Naive thymus-derived CD8-positive, alpha-beta T cell (primary cell): ENCODE measurements at regions of chr1 and their contacts with region 1.

Region 1: GRCh38 chr1:28235755-28236655 is at the start of gene ATP5IF1:
- DNase-seq: peak; percentile 84 to 97 (median 94)
- ATAC-seq: peak; percentile 95
- H3K4me3 Mint-ChIP-seq: peak within 1 kb of the TSS in 1 of 10 donors; percentile 29
- H3K27ac Mint-ChIP-seq: no peak within 1 kb of the TSS
- H3K4me1 Mint-ChIP-seq: peaks cover 8 to 28% (median 18%) of the 10 kb centered on the region in 4 donors
- H3K27me3 Mint-ChIP-seq: no peaks in the 10 kb centered on the region
- polyA plus RNA-seq, gene ATP5IF1: 468 to 666 (median 606) TPM

Region 2: DNA sequence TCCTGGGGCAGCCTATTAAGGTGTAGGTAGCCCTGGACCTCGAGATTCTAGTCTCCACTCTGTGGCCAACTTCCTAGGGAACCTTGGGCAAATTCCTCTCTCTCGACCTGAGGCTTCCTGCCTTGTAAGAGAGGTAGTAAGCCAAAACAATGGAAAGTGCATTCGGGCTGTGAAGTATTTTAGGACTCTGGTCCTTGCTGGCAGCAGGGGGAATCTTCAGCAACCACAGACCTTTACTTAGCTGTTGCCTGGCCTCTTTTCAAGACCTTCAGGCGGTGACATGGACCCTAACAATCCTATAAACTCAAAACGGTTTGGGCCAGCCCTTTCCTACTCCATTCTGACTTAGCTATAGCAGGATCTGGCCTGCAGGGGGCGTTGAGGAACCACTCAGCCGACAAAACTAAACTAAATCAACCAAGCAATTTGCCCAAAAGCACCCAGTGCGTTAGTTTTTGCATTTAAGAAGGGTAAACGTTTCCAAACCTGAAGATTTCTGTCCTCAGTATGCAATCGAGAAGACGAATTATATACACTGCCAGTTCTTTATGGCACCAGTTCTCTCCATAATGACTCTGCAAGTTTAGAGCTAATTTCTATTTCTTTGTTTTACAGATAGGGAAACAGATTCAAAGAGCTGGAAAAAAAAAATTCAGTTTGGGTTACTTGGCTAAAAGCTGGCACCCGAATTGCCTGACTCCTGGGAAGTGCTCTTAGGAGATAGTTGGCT is 12.4 kb after region 1 on chr1:
- POLR2A ChIA-PET with region 1: interaction called, 183 read pairs
- DNase-seq: peak; percentile 61 to 89 (median 78)
- ATAC-seq: peak in 1 of 2 donors; percentile 18
- H3K4me3 Mint-ChIP-seq: peak overlapping the region; percentile 68 to 98 (median 84)
- H3K27ac Mint-ChIP-seq: peak overlapping the region; percentile 92 to 98 (median 94)
- H3K4me1 Mint-ChIP-seq: peaks cover 23 to 59% (median 47%) of the 10 kb centered on the region in 4 donors
- H3K27me3 Mint-ChIP-seq: no peaks in the 10 kb centered on the region